ENCODE measurements at regions of chr19 and their contacts with region 1.

Region 1: DNA sequence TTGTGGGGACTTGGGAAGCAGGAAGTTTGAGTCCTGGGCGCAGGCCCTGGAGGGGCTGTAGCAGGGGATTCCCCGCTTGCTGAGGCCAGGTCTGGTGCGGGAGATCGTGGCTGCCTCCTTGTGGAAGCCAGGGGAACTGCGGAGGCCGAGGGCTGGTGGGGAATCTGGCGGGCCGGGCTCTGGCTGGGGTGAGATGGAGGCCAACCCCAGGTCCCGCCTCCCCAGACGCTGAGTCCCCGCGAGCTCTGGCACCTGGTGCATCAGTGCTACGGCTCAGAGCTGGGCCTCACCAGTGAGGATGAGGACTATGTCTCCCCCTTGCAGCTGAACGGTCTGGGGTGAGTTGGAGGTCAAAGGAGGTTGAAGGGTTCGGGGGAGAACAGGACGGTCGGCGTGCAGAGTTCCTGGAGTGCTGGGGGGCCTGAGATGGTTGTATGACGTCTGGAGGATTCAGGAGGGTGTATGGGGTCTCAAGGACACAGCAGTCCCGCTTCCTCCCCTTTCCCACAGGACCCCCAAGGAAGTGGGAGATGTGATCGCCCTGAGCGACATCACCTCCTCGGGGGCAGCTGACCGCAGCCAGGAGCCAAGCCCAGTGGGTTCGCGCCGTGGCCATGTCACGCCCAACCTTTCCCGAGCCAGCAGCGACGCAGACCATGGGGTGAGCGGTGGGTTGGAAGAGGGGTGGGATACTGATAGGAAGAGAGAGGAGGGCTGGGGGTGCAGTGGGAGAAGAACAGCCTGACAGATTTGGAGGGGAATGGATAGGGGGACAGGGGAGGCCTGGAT is 13.1 kb downstream of the GRAMD1A start:
- DNase-seq: peak; percentile 83
- ATAC-seq: peak; percentile 67
- H3K4me3 Mint-ChIP-seq: no peak overlapping the region
- H3K27ac Mint-ChIP-seq: peak overlapping the region; percentile 56
- H3K4me1 Mint-ChIP-seq: peaks cover 52% of the 10 kb centered on the region
- H3K27me3 Mint-ChIP-seq: no peaks in the 10 kb centered on the region

Region 2: GRCh38 chr19:34856052-34856451 is 157.2 kb before region 1 on chr19:
- CTCF ChIA-PET with region 1: no interaction called
- DNase-seq: no peak
- ATAC-seq: no peak
- H3K4me3 Mint-ChIP-seq: no peak overlapping the region
- H3K27ac Mint-ChIP-seq: no peak overlapping the region
- H3K4me1 Mint-ChIP-seq: peaks cover 17% of the 10 kb centered on the region
- H3K27me3 Mint-ChIP-seq: no peaks in the 10 kb centered on the region

Region 3: DNA sequence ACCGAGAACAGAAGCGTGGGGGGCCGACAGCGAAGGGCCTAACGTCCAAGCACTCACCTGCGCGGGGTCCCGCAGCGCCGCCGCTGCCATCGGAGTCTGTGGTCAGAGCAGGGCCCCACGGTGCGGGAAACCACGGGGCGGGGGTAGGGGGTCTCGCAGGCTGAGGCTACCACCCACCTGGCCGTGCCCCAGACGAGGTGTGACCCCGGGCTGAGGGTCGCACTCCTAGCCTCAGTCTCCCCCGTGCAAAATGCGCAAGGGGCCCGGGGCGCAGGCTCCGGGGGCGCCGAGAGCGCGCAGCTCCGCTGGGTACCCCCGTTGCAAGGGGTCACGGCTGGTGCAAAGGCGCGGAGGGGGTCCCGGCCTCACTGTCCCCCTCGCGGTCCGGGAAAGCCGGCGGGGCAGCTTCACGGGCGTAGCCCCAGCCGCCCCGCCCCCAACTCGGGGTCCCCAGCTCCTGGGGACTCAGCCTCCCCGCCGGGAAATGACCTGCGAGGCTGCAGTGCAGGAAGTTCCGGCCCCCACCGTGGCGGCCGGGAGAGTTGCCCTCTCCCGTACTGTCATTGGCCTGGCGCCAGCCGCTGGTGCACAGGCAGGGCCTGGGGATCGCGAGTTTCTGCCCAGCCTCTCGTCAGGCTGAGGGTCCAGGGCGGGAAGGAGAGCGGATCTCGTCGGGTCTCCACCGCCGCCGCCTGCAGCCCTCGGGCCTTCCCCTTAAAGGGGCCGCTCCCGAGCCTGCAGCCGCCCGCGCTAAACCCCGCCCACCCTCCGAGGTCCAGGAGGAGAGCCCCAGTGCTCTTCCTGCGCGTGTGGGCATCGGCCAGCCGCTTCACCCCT is 49.4 kb before region 1 on chr19 and contains the start of gene ZNF792:
- CTCF ChIA-PET with region 1: interaction called, 21 read pairs
- DNase-seq: peak; percentile 68
- ATAC-seq: peak; percentile 86
- H3K4me3 Mint-ChIP-seq: peak within 1 kb of the TSS; percentile 85
- H3K27ac Mint-ChIP-seq: peak within 1 kb of the TSS; percentile 86
- H3K4me1 Mint-ChIP-seq: peaks cover 22% of the 10 kb centered on the region
- H3K27me3 Mint-ChIP-seq: no peaks in the 10 kb centered on the region
- total RNA-seq, gene ZNF792: 13.5 to 15.3 TPM

Region 4: DNA sequence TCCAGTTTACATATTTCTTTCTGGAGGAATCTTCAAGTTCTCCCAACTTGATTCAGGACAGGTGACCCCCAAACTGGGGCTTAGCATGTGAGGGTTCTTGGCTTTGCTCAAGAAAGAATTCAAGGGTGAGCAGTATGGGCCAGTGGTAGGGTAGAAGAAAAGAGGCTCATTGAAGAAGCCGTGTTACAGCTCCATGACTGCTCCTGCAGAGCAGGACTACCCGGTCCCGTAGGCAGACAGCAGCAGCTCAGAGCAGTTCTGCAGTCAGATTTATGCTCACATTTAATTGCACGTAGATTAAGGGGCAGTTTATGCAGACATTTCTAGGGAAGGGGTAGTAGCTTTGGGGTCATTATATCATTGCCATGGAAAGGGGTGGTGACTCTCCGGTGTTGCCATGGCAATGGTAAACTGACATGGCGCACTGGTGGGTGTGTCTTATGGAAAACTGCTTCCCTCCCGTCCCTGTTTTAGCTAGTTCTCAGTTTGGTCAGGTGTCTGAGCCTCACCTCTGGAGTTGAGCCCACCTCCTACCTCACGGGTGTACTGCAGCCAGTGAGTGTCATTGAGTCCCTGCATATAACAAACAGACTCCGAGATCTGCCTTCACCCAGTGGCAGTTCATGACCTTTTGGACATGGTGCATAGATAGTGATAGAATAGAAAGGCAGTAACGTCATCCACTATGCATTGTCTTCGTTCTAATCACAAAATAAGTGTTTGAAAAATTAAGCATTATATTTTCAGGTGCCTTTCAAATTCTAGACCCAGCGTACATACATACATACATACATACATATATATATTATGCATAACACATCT is 33.2 kb before region 1 on chr19:
- CTCF ChIA-PET with region 1: interaction called, 97 read pairs
- DNase-seq: no peak
- ATAC-seq: no peak
- H3K4me3 Mint-ChIP-seq: no peak overlapping the region
- H3K27ac Mint-ChIP-seq: no peak overlapping the region
- H3K4me1 Mint-ChIP-seq: peaks cover 5% of the 10 kb centered on the region
- H3K27me3 Mint-ChIP-seq: peaks cover 8% of the 10 kb centered on the region

Region 5: DNA sequence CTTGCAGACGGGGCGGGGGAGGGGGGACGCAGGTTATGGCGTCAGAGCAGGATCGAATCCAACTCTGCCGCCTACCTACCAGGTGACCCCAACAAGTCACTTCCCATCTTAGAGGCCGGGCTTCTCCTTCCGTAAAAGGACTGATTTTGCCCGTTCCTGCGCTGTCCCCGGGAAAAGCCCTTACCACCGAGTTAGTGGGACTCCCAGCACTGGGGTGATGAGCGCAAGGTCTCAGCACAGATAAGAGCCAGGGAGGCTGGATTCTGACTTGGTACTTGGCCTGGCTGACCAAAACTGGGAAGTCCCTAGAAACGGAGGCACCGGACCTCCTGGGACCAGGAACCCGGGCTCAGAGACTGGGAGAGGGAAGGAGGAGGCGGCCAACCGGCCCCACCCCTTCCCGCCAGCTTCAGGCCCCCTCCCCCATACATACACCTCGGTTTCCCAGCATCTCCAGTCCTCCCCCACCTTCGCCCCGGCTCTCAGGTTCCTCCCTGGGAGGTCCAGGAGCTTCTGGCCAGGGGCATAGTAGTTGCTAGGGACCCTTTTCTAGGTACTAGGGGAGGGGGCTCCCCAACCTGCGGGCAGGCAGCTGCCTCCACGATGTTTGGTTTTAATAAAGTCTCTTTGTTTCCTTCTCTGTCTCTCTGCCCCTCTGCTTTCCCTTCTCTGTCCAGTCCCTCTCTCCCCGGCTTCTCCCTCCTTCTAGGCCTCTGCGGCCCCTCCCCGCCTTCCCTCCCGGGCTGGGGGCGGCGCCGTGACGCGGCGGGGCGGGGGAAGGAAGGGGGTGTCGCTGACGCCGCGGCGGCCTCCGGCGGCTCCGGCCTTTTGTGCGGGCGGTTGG is 13.5 kb before region 1 on chr19 and contains the start of gene GRAMD1A:
- CTCF ChIA-PET with region 1: interaction called, 38 read pairs
- DNase-seq: peak; percentile 82
- ATAC-seq: peak; percentile 60
- H3K4me3 Mint-ChIP-seq: peak within 1 kb of the TSS; percentile 91
- H3K27ac Mint-ChIP-seq: peak within 1 kb of the TSS; percentile 92
- H3K4me1 Mint-ChIP-seq: peaks cover 71% of the 10 kb centered on the region
- H3K27me3 Mint-ChIP-seq: no peaks in the 10 kb centered on the region
- total RNA-seq, gene GRAMD1A: 109 to 127 TPM

Region 6: DNA sequence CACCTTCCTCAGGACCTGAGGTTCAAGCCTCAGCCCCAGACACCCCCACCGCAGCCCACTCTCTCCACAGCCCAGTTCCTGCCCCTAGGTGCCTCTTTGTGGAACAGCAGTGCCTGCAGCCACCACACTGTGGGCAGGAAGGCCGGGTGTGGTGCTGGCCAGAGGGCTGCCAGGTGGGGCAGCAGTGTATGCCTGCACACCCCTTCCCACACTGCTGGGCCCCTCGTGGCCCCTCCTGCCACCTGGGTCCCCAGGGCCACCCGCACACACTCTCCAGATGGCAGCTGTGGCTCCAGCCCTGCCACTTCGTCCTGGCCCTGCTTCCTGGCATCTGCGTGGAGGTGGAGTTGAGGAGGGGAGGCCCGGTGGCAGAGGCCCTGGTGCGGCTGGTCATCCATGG is 63.4 kb after region 1 on chr19:
- CTCF ChIA-PET with region 1: no interaction called
- DNase-seq: no peak
- ATAC-seq: no peak
- H3K4me3 Mint-ChIP-seq: no peak overlapping the region
- H3K27ac Mint-ChIP-seq: no peak overlapping the region
- H3K4me1 Mint-ChIP-seq: peaks cover 2% of the 10 kb centered on the region
- H3K27me3 Mint-ChIP-seq: peaks cover 3% of the 10 kb centered on the region